Ascending aorta (tissue), 2 donors: ENCODE measurements at regions of chr11 and their contacts with region 1.

Region 1: DNA sequence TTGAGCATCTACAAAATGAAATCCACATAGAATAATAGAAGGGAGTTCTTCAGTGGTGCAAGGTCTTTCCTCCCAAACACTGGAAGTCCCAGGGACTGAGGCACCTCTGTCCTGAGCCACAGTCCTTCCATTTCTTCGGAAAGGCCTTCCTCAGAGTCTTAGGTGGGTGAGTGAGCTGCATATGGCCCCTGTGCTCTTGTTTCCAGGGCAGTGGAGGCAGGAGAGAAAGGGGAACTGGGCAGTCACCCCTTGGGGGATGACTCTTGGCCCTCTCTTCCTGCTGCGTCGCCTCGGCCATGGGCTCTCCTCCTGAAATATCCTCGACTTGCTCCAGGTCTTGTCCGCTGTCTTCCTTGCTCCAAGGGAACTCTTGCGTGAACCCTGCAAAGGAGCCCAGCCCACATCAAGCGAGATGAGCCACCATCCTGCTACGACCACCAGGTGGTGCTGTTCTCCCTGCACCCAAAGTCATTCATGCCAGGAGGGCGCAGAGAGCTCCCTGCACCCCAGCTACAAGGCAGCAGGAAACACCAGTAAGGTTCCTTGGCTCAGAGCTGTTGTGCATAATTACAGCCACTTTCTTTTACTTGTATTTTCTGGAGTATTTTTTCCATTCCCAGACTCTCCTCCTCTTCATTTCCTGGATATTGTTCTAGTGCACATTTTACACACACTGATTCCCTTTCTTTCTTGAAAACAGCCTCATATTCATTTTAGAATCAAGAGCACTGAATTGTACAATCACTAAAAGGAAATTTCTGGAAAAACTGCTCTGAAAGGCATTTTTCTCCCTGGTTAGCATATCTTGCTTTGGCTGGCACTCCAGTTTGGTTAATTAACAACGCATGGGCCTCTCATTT is 397.8 kb downstream of the OPCML start:
- DNase-seq: no peak
- H3K4me3 ChIP-seq: no peak overlapping the region
- H3K27ac ChIP-seq: no peak overlapping the region
- H3K4me1 ChIP-seq: no peaks in the 10 kb centered on the region
- H3K27me3 ChIP-seq: no peaks in the 10 kb centered on the region
- CTCF ChIP-seq: peak in 2 of 3 experiments; percentile 27 to 60

Region 2: DNA sequence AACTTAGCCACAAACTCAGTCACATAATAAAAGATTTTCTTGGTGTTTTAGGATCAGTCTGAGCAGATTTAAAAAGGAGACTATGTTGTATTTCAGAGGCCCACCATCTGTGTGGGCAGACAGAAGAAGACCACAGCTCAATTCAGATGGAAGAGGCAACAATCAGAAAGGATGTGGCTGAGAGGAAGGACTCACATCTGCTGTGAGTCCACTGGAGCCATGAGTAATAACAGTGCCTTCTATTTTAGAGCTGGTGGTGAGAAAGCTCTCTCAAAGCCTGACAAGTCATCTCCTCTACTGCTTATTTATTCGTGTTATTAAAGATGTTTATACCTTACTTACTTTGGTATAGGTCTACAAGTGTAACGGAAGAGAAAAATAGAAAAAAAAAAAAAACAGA is 40.6 kb after region 1 on chr11:
- intact Hi-C with region 1: no loop called
- DNase-seq: no peak
- H3K4me3 ChIP-seq: no peak overlapping the region
- H3K27ac ChIP-seq: no peak overlapping the region
- H3K4me1 ChIP-seq: no peaks in the 10 kb centered on the region
- H3K27me3 ChIP-seq: no peaks in the 10 kb centered on the region
- CTCF ChIP-seq: no peak

Region 3: GRCh38 chr11:133732109-133732674 is 597.6 kb after region 1 on chr11:
- intact Hi-C with region 1: no loop called
- DNase-seq: no peak
- H3K4me3 ChIP-seq: no peak overlapping the region
- H3K27ac ChIP-seq: no peak overlapping the region
- H3K4me1 ChIP-seq: no peaks in the 10 kb centered on the region
- H3K27me3 ChIP-seq: no peaks in the 10 kb centered on the region
- CTCF ChIP-seq: no peak

Region 4: DNA sequence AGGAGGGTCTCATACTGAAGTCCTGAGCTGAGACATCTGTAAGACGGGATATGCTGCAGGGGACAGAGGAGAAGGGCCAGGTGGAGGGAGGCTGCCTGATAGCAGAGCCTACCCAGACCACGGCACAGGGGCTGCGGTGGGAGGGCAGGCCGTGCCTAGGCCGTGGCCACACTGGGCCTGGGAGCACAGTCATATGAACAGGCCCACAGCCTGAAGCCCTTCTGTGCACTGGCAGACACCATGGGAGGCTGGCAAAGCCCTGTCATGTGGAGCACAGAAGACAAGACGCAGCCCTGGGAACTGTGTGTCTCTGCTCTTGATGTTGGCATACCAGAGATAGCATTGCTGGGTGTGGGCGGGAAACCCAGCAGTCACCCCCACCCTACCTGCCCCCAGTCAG is 707.5 kb after region 1 on chr11:
- intact Hi-C with region 1: loop called (anchors 5 kb)
- DNase-seq: no peak
- H3K4me3 ChIP-seq: no peak overlapping the region
- H3K27ac ChIP-seq: no peak overlapping the region
- H3K4me1 ChIP-seq: no peaks in the 10 kb centered on the region
- H3K27me3 ChIP-seq: no peaks in the 10 kb centered on the region
- CTCF ChIP-seq: no peak